Activated CD4-positive, alpha-beta memory T cell treated with anti-CD3 and anti-CD28 coated beads, Interleukin-2, amount 10 ng/mL, durations not matched to agents 7 days and 5 days (primary cell): ENCODE measurements at regions of chr19 and their contacts with region 1.

Region 1: GRCh38 chr19:49451430-49452181 is at the start of gene PIH1D1:
- DNase-seq: peak; percentile 97
- H3K4me3 Mint-ChIP-seq: peak within 1 kb of the TSS; percentile 99
- H3K27ac Mint-ChIP-seq: peak within 1 kb of the TSS; percentile 100
- H3K4me1 Mint-ChIP-seq: peaks cover 72% of the 10 kb centered on the region
- H3K27me3 Mint-ChIP-seq: no peaks in the 10 kb centered on the region
- total RNA-seq, gene PIH1D1: 168 to 170 TPM

Region 2: DNA sequence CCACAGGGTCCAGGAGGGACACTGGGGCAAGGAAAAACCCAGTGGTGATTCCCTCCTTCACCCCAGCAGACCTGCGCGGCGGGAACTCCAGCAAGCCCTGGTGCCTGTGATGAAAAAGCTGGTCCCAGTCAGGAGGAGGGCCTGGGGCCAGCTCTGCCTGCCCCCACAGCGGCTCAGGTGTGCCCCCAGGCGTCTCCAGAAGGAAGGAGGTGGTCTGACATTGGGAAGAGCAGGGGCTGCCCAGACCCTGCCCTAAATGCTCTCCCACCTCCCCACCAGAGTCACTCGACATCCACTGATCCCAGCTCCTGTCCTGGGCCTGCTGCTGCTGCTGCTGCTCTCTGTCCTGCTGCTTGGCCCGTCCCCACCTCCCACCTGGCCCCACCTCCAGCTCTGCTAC is 34.5 kb before region 1 on chr19:
- CTCF ChIA-PET with region 1: no interaction called
- POLR2A ChIA-PET with region 1: no interaction called
- DNase-seq: no peak
- H3K4me3 Mint-ChIP-seq: no peak overlapping the region
- H3K27ac Mint-ChIP-seq: no peak overlapping the region
- H3K4me1 Mint-ChIP-seq: peaks cover 21% of the 10 kb centered on the region
- H3K27me3 Mint-ChIP-seq: peaks cover 55% of the 10 kb centered on the region

Region 3: DNA sequence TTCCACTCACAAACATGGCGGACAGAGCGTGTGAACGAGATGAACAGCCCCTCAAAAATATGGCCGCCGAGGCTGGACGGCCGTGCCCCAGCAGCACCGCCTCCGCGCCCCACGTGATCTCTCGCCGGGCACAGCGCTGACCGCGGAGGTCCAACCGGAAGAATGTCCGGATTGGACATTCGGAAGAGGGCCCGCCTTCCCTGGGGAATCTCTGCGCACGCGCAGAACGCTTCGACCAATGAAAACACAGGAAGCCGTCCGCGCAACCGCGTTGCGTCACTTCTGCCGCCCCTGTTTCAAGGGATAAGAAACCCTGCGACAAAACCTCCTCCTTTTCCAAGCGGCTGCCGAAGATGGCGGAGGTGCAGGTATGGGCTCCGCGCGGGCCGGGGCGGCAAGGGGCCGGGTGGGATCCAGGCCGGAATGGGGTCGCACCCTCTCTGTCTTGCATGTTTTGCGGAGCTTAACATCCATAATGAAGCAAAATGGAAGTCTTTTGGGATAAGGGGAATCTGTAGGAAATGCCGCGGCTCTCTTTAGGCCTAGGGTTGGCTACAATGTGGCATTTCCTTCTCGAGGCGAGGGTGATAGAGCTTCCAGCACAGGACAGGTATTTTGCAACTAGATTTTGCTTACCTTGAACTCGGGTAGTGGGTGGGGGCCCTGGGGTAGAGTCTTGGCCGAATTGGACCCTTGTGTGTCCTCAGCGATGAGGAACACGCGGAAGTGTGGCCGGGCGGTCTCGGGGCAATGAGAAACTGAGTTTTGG is 35.9 kb after region 1 on chr19 and contains the start of gene RPL13A:
- CTCF ChIA-PET with region 1: interaction called, 3 read pairs
- POLR2A ChIA-PET with region 1: interaction called, 27 read pairs
- DNase-seq: peak; percentile 100
- H3K4me3 Mint-ChIP-seq: peak within 1 kb of the TSS; percentile 95
- H3K27ac Mint-ChIP-seq: peak within 1 kb of the TSS; percentile 87
- H3K4me1 Mint-ChIP-seq: peaks cover 50% of the 10 kb centered on the region
- H3K27me3 Mint-ChIP-seq: no peaks in the 10 kb centered on the region
- total RNA-seq, gene RPL13A: 2,417 to 2,463 TPM

Region 4: DNA sequence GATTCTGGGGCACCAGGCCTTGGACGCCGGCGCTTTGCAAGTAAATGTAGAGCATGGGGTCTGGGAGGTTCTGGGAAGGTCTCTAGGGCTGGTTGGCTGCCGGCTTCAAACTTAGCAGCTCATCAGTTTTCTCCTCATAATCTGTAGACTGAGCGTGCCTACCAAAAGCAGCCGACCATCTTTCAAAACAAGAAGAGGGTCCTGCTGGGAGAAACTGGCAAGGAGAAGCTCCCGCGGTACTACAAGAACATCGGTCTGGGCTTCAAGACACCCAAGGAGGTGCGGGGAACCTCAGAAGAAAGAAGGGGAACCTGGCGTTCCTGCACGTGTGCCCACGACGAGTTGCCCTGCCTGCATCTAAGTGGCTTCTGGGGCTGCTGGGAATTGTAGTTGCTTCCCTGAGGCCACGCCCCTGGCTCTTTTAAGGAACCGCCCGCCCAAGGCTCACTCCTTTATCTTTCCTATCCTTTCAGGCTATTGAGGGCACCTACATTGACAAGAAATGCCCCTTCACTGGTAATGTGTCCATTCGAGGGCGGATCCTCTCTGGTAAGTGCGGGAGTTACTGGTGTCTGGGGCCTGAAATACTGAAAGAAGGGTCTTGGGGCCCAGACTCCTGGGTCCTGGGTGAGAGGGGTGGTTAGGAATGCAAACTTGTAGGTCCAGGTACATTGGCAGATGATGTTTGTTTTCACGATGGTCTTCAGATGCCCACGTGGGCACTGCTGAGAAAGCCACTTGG is 45.6 kb after region 1 on chr19:
- CTCF ChIA-PET with region 1: interaction called, 3 read pairs
- POLR2A ChIA-PET with region 1: interaction called, 27 read pairs
- DNase-seq: peak; percentile 84
- H3K4me3 Mint-ChIP-seq: peak overlapping the region; percentile 98
- H3K27ac Mint-ChIP-seq: peak overlapping the region; percentile 99
- H3K4me1 Mint-ChIP-seq: peaks cover 67% of the 10 kb centered on the region
- H3K27me3 Mint-ChIP-seq: no peaks in the 10 kb centered on the region

Region 5: GRCh38 chr19:49690656-49691242 is 239.1 kb after region 1 on chr19 and contains the start of gene CPT1C:
- CTCF ChIA-PET with region 1: no interaction called
- POLR2A ChIA-PET with region 1: no interaction called
- DNase-seq: peak; percentile 55
- H3K4me3 Mint-ChIP-seq: peak within 1 kb of the TSS; percentile 65
- H3K27ac Mint-ChIP-seq: no peak within 1 kb of the TSS
- H3K4me1 Mint-ChIP-seq: peaks cover 33% of the 10 kb centered on the region
- H3K27me3 Mint-ChIP-seq: peaks cover 23% of the 10 kb centered on the region
- total RNA-seq, gene CPT1C: 1.9 to 2.9 TPM